GM23248 (cell line): ENCODE measurements at regions of chr9 and their contacts with region 1.

Region 1: GRCh38 chr9:35789541-35789940 is 1.9 kb upstream of the NPR2 start:
- DNase-seq: no peak
- H3K4me3 ChIP-seq: no peak overlapping the region
- H3K27ac ChIP-seq: no peak overlapping the region
- H3K4me1 ChIP-seq: peaks cover 32% of the 10 kb centered on the region
- H3K27me3 ChIP-seq: no peaks in the 10 kb centered on the region; the same call in 1 of the 2 replicates

Region 2: GRCh38 chr9:35882263-35882848 is 92.8 kb after region 1 on chr9:
- in situ Hi-C with region 1: loop called (anchors 10 kb)
- DNase-seq: peak; percentile 80
- H3K4me3 ChIP-seq: no peak overlapping the region
- H3K27ac ChIP-seq: peak overlapping the region; percentile 1; the same call in 1 of the 2 replicates
- H3K4me1 ChIP-seq: peaks cover 12% of the 10 kb centered on the region
- H3K27me3 ChIP-seq: no peaks in the 10 kb centered on the region